ENCODE measurements at regions of chr17 and their contacts with region 1.

Region 1: GRCh38 chr17:18038861-18039534 is at the starts of genes ATPAF2 and GID4:
- DNase-seq: peak; percentile 100
- H3K4me3 Mint-ChIP-seq: peak within 1 kb of the TSS; percentile 92
- H3K27ac Mint-ChIP-seq: peak within 1 kb of the TSS; percentile 80
- H3K4me1 Mint-ChIP-seq: peaks cover 40% of the 10 kb centered on the region
- H3K27me3 Mint-ChIP-seq: no peaks in the 10 kb centered on the region
- total RNA-seq, gene ATPAF2: 27.5 to 30.0 TPM
- total RNA-seq, gene GID4: 6.1 to 6.2 TPM

Region 2: DNA sequence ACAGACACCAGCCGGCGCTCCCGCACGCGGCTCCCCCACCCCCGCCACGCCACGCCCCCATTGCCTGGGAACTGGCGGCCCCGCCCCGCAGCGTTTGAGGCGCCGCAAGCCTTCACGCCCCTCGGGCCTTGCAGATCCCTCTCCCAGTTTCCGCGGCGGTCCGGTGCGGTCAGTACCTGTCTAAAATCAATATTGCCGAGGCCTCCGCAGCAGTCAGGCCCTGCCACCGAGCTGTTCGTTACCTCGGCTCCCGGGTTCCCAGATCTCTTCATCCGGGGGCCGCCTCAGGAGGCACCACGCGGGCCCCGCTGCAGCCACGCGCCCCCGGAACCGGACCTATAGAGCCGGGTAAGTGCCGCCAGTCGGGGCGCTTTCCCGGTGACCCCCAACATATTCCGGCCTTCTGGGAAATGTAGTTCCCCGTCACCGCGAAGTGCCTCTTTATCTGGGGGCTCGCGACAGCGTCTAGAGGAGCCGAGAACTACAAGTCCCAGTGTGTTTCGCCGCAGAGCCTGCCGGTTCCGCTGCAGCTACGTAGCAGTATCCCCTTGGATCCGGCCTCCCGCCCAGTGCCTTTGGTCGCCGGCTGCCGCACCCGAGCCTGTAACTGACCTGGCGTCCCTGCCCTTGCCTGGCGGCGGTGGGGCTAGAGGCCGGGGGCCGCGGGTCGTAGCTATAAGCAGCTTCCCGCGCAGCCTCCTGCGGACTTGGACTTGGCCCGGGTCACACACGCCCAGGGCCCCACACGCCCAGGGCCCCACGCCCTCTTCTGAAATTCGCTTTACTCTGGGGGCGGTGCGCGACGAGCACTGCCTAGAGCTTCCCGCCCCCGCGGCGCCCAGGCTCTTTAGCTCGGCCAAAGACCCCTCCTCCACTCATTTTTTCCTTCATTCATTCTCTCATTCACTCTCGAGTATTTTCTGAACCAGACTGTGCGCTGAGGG is 447.4 kb before region 1 on chr17 and contains the start of gene PEMT:
- CTCF ChIA-PET with region 1: no interaction called
- POLR2A ChIA-PET with region 1: no interaction called
- intact Hi-C with region 1: loop called (anchors 1 kb)
- DNase-seq: peak; percentile 96
- H3K4me3 Mint-ChIP-seq: peak within 1 kb of the TSS; percentile 88
- H3K27ac Mint-ChIP-seq: peak within 1 kb of the TSS; percentile 88
- H3K4me1 Mint-ChIP-seq: peaks cover 23% of the 10 kb centered on the region
- H3K27me3 Mint-ChIP-seq: no peaks in the 10 kb centered on the region
- total RNA-seq, gene PEMT: 38.3 to 41.1 TPM

Region 3: GRCh38 chr17:17752089-17752820 is 286.7 kb before region 1 on chr17:
- CTCF ChIA-PET with region 1: no interaction called
- POLR2A ChIA-PET with region 1: no interaction called
- intact Hi-C with region 1: loop called (anchors 10 kb)
- DNase-seq: peak; percentile 99
- H3K4me3 Mint-ChIP-seq: peak overlapping the region; percentile 96
- H3K27ac Mint-ChIP-seq: peak overlapping the region; percentile 93
- H3K4me1 Mint-ChIP-seq: peaks cover 39% of the 10 kb centered on the region
- H3K27me3 Mint-ChIP-seq: no peaks in the 10 kb centered on the region

Region 4: GRCh38 chr17:17972126-17972951 is 66.7 kb before region 1 on chr17 and contains the starts of genes DRC3 and TOM1L2:
- CTCF ChIA-PET with region 1: interaction called, 6 read pairs
- POLR2A ChIA-PET with region 1: interaction called, 8 read pairs
- intact Hi-C with region 1: loop called (anchors 1 kb)
- DNase-seq: peak; percentile 100
- H3K4me3 Mint-ChIP-seq: peak within 1 kb of the TSS; percentile 91
- H3K27ac Mint-ChIP-seq: peak within 1 kb of the TSS; percentile 78
- H3K4me1 Mint-ChIP-seq: peaks cover 35% of the 10 kb centered on the region
- H3K27me3 Mint-ChIP-seq: no peaks in the 10 kb centered on the region
- total RNA-seq, gene DRC3: 0.34 to 0.52 TPM
- total RNA-seq, gene TOM1L2: 11.1 to 12.7 TPM

Region 5: DNA sequence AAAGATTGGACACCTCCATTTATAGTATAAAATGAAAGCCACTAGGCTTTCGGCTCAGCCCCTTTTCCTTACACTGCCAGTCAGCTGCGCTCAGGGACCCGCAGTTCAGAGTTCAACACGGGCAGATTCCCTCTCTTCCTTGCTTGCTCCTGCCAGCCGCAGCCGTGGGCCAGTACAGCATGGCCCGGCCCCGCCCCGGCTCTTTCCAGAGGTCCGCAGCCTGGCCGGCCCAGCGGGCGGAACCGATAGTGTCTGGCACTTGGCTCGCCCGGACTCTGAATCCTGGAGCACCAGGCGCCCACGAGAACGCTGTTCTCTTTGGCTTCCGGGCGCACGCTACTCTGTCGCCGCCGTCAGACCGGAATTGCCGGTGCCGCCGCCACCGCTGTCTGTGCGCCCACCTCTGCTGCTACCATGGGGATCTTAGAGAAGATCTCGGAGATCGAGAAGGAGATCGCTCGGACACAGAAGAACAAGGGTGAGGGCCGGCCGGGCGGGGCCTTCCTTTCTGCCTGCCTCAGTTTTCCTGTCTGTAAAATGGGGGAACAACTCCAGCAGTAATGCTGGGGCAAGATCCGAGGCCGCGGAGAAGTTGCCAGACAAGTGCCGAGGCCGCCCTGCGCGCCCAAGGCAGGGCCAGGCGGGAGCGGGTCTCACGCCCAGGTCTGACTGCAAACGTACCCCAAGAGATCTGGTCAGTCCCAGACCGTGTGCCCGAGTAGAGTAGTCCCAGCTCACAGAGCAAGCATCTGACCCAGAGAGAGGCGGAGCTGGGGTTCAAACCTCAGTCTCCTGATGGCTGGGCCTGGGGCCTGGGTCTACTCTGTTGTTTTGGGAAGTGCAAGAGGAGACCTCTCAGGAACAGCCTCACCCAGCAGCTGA is 48.9 kb after region 1 on chr17 and contains the start of gene DRG2:
- CTCF ChIA-PET with region 1: no interaction called
- POLR2A ChIA-PET with region 1: no interaction called
- intact Hi-C with region 1: loop called (anchors 1 kb)
- DNase-seq: peak; percentile 93
- H3K4me3 Mint-ChIP-seq: peak within 1 kb of the TSS; percentile 99
- H3K27ac Mint-ChIP-seq: peak within 1 kb of the TSS; percentile 94
- H3K4me1 Mint-ChIP-seq: peaks cover 25% of the 10 kb centered on the region
- H3K27me3 Mint-ChIP-seq: no peaks in the 10 kb centered on the region
- total RNA-seq, gene DRG2: 37.7 to 39.3 TPM